ENCODE measurements at regions of chr12 and their contacts with region 1.

Region 1: DNA sequence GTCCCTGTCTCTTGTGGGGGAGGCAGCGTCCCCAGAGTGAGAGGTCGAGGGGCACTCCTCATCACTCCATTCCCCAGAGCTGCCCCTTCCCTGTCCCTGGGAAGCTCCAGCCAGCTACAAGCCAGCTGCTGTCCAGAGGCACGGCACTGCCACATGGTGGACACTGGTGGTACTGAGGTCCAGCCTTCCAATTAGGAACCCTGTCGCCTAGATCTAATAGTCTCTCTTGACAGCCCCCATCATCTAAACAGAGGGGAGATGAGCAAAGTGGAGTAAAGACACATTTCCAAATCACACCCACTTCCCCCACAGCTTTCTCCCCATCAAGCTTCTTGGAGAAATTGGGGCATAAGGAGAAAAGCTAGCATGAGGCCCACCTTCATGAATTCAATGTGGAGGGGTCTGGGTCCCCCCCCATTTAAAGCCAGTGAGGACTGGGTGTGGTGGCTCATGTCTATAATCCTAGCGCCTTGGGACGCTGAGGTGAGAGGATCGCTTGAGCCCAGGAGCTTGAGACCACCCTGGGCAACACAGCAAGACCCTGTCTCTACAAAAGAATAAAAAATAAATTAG is 2.1 kb upstream of the INHBE start:
- DNase-seq: peak; percentile 77

Region 2: DNA sequence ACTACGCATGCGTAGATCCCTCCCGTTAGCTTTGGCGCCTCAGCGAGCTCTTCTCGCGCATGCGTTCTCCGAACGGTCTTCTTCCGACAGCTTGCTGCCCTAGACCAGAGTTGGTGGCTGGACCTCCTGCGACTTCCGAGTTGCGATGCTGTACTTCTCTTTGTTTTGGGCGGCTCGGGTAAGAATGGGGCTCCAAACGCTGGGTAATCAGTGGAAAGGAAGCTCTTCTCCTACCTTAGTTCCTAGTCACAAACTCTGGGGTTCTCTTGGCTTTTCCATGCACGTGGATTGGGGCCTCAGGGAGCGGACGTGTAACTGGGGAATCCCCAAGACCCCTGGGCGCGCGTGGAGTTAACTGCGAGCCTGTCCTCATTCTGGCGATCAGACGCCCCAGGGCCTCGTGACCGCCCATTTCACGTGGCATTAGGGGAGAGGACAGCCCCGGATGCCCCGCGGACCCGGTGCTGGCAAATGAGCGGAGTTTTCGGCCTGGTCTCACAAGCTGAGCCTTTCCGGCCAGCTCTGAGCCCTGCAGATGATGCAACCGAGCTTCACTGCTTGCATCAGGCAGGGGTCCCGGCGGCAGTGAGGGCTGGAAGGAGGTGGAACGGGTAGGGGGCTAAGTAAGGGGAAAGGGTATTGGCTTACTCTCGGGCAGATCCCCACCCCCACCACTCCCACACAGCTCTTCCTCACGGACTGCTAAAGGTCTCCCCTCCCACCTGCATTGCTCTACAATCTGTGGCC is 223.2 kb before region 1 on chr12 and contains the start of gene SHMT2:
- CTCF ChIA-PET with region 1: interaction called, 3 read pairs
- POLR2A ChIA-PET with region 1: interaction called, 14 read pairs
- DNase-seq: peak; percentile 99

Region 3: DNA sequence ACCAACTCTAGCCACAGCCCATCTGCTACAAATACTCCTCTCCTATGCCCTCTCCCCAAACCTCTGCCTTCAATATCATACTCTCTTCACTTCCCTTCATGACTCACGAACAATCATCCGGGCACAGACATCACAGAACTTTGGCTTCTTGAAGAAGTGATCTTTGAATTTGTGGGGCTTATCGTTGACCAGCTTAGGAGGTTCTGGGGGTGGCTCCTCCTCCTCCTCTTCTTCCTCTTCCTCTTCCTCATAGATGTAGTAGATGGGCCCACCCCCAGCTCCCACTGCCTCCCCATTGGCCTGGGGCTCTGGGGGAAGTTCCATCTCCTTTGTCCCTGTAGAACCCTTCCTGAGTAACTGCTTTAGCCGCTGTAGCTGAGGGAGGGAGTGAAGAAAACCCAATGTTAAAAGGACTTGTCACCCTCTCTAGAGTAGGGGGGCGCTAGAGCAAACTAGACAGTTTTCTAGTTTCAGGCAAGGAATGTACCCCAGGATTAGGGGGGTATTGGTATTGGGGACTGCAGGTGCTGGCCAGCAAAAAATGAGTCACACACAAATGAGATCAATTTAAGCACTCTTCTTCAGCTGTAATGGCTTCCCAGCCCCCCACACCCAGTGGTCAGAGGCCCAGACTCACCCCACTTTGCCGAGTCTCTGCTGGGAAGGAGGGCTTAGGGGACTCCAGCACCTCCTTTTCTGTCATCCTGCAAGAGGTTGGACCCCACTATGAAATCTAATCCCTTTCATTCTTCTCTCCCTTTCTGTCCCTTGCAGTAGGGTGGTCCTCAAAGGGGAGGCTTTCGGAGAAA is 203.9 kb before region 1 on chr12:
- CTCF ChIA-PET with region 1: interaction called, 12 read pairs
- POLR2A ChIA-PET with region 1: interaction called, 13 read pairs
- DNase-seq: no peak

Region 4: DNA sequence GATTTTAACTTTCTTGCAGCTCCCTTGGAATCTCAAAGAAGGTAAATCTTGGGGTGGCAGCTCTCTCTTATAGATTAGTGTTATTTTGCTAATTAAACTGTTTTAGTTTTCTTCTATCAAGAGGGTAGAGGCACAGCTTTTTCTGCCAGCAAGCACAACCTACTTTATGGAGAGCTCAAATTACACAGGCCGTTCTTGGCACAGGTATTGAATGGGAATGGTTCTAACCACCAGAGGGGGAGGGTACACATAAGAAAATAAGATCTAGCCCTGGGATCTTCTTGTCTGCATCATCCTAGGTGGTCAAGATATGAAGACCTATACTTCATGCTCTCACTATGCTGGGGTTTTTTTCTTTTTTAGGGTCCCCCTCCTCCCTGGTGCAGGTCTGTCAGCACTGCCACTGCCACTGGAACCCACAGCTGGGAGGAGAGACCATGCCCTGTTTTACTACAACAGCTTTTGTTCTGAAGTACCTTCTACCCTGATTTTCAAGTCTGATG is 153.5 kb before region 1 on chr12:
- CTCF ChIA-PET with region 1: interaction called, 16 read pairs
- POLR2A ChIA-PET with region 1: interaction called, 9 read pairs
- DNase-seq: no peak

Region 5: DNA sequence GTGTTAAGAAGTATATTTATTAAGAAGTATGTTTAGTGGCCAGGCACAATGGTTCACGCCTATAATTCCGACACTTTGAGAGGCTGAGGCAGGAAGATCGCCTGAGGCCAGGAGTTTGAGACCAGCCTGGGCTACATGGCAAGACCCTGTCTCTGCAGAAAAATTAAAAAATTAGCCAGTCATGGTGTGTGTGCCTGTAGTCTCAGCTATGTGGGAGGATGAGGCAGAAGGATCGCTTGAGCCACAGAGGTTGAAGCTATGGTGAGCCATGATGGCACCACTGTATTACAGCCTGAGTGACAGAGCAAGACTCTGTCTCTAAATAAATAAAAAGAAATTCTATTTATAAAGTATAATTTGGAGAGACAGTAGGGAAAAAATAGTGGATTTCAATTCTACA is 42.5 kb before region 1 on chr12:
- CTCF ChIA-PET with region 1: interaction called, 10 read pairs
- POLR2A ChIA-PET with region 1: no interaction called
- DNase-seq: no peak

Region 6: DNA sequence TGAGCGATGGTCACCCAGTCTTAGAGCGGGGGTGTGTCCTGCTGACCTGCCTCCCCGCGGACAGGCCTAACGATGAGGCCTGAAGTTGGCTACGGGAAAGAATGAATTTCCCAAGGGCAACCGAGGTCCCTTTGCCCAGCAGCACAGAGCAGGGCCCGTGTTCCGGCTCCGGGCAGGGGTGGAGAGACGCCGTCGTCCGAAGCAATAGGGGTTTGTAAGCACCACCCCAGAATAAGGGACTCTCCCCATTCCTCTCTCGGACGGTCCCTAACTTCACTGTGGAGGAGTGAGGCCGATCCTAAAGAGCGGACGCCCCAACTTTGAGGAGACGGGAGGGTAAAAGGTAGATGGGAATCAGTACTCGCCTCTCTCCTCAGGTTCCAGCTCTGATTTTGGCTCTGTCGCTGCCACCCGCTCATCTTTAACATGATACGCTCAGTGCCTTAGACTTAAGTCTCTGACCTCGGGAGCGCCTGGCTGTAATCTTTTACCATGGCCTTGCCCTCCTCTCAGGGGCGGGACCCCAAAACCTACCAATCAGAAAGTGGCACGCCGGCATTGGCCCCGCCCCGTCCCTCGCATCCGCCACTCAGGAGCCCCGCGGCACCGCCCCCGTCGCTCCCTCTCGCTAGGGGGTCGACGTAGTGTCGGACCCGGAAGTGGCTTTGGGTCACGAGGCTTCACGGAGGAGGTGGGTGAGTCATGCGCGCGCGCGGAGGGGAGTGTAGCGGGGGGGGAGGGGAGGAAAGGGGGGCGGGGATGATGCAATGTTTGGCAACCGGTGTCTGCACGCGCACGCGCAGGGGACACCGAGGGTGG is 67.2 kb after region 1 on chr12 and contains the start of gene DDIT3:
- CTCF ChIA-PET with region 1: no interaction called
- POLR2A ChIA-PET with region 1: interaction called, 14 read pairs
- DNase-seq: peak; percentile 95

Region 7: GRCh38 chr12:57576613-57577160 is 123.7 kb after region 1 on chr12:
- CTCF ChIA-PET with region 1: no interaction called
- POLR2A ChIA-PET with region 1: no interaction called
- DNase-seq: no peak